Endothelial cell of umbilical vein (primary cell): ENCODE measurements at regions of chr13 and their contacts with region 1.

Region 1: GRCh38 chr13:95660981-95661581 is 15.9 kb upstream of the DNAJC3 start:
- DNase-seq: peak; percentile 61
- H3K4me3 ChIP-seq: no peak overlapping the region
- H3K27ac ChIP-seq: no peak overlapping the region
- H3K4me1 ChIP-seq: no peaks in the 10 kb centered on the region
- H3K27me3 ChIP-seq: peaks cover 8 to 10% of the 10 kb centered on the region in 2 experiments
- CTCF ChIP-seq: peak; percentile 45 to 52
- POLR2A ChIP-seq: no peak

Region 2: DNA sequence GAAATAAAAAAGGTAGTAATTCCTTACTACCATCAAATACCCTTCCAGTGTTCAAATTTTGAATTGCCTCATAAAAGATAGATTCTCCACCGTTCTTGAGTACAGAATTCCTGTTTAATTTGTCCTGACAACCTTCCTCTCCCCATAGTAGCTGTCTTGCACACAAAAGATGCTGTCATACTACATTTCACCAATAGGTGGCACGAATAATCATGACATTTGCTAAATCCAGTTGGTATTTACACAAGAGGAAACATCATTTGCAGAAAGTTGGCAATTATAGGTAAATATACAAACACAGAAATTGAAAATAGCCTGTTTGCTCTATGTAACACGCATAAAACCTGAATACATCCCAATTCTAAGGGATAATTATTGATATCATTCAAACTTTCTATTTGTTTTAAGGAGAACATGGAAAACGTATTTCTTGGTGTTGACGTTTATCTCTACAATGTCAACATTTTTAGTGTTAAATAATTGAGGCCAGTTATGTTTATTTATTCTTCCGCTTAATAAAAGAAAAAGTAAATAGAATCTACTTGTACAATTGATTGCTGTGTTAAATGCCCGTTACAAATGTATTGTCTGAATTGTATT is 166.9 kb before region 1 on chr13:
- CTCF ChIA-PET with region 1: interaction called, 19 read pairs
- POLR2A ChIA-PET with region 1: no interaction called
- dilution Hi-C with region 1: no loop called
- intact Hi-C with region 1: loop called (anchors 2 kb)
- DNase-seq: peak; percentile 85
- H3K4me3 ChIP-seq: no peak overlapping the region
- H3K27ac ChIP-seq: no peak overlapping the region
- H3K4me1 ChIP-seq: no peaks in the 10 kb centered on the region
- H3K27me3 ChIP-seq: no peaks in the 10 kb centered on the region
- CTCF ChIP-seq: peak; percentile 48 to 59
- POLR2A ChIP-seq: no peak

Region 3: GRCh38 chr13:95624020-95624419 is 37.1 kb before region 1 on chr13:
- CTCF ChIA-PET with region 1: interaction called, 139 read pairs
- POLR2A ChIA-PET with region 1: no interaction called
- dilution Hi-C with region 1: no loop called
- intact Hi-C with region 1: loop called (anchors 1 kb)
- DNase-seq: peak; percentile 50
- H3K4me3 ChIP-seq: no peak overlapping the region
- H3K27ac ChIP-seq: no peak overlapping the region
- H3K4me1 ChIP-seq: no peaks in the 10 kb centered on the region
- H3K27me3 ChIP-seq: no peaks in the 10 kb centered on the region
- CTCF ChIP-seq: peak; percentile 52 to 59
- POLR2A ChIP-seq: no peak

Region 4: DNA sequence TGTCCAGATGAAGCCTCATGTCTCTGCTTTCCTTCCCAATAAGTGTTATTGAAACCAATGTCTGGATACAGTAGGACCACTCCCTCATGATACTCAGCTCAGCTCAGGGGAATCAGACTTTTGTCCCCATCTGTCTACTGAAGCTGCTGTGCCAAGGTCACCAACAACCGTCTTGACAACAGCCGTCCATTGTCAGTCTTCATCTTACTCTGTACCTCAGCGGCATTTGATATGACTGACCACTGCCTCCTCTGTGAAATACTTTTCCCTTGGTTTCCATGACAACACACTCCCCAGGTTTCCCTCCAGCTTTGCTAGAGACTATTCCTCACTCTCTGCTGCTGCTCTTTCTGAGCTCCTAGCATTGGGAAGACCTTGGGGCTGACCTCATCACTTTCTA is 29.3 kb before region 1 on chr13:
- CTCF ChIA-PET with region 1: interaction called, 139 read pairs
- POLR2A ChIA-PET with region 1: no interaction called
- dilution Hi-C with region 1: no loop called
- intact Hi-C with region 1: no loop called
- DNase-seq: no peak
- H3K4me3 ChIP-seq: no peak overlapping the region
- H3K27ac ChIP-seq: no peak overlapping the region
- H3K4me1 ChIP-seq: no peaks in the 10 kb centered on the region
- H3K27me3 ChIP-seq: no peaks in the 10 kb centered on the region
- CTCF ChIP-seq: no peak
- POLR2A ChIP-seq: no peak

Region 5: DNA sequence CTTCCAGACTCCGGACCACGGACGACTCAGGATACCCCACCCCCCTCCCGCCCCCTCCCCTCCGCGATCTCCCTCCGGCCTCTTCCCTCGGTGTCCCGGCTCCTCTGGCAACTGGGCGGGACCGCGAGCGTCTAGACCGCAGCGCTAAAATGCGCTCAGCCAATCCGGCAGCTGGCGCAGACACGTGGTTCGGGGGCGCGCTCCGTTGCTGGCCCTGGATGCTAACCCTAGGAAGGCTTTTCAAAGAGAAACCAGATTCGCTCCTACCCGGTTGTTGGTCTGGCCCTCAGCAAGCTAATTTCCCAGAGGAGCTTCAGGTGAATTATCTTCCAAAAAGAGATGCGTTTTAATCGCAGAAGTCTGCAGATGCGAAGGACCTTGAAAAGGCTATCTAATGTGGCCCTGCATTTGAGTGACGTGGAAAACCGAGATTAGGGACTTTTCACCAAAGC is 16.5 kb before region 1 on chr13 and contains the start of gene DZIP1:
- CTCF ChIA-PET with region 1: interaction called, 15 read pairs
- POLR2A ChIA-PET with region 1: interaction called, 3 read pairs
- dilution Hi-C with region 1: no loop called
- intact Hi-C with region 1: no loop called
- DNase-seq: peak; percentile 84
- H3K4me3 ChIP-seq: peak within 1 kb of the TSS; percentile 78 to 93 (median 86)
- H3K27ac ChIP-seq: peak within 1 kb of the TSS; percentile 39
- H3K4me1 ChIP-seq: peaks cover 29% of the 10 kb centered on the region
- H3K27me3 ChIP-seq: no peaks in the 10 kb centered on the region
- CTCF ChIP-seq: no peak
- POLR2A ChIP-seq: no peak
- total RNA-seq, gene DZIP1: 32.1 and 33.9 TPM in 2 replicates

Region 6: GRCh38 chr13:95671597-95671996 is 10.5 kb after region 1 on chr13:
- CTCF ChIA-PET with region 1: interaction called, 18 read pairs
- POLR2A ChIA-PET with region 1: interaction called, 9 read pairs
- dilution Hi-C with region 1: no loop called
- intact Hi-C with region 1: no loop called
- DNase-seq: no peak
- H3K4me3 ChIP-seq: no peak overlapping the region
- H3K27ac ChIP-seq: no peak overlapping the region
- H3K4me1 ChIP-seq: peaks cover 10% of the 10 kb centered on the region
- H3K27me3 ChIP-seq: no peaks in the 10 kb centered on the region
- CTCF ChIP-seq: no peak
- POLR2A ChIP-seq: no peak

Region 7: GRCh38 chr13:95704510-95704909 is 43.4 kb after region 1 on chr13:
- CTCF ChIA-PET with region 1: interaction called, 15 read pairs
- POLR2A ChIA-PET with region 1: no interaction called
- dilution Hi-C with region 1: no loop called
- intact Hi-C with region 1: no loop called
- DNase-seq: no peak
- H3K4me3 ChIP-seq: no peak overlapping the region
- H3K27ac ChIP-seq: no peak overlapping the region
- H3K4me1 ChIP-seq: no peaks in the 10 kb centered on the region
- H3K27me3 ChIP-seq: no peaks in the 10 kb centered on the region
- CTCF ChIP-seq: peak; percentile 27 to 31
- POLR2A ChIP-seq: no peak